Activated CD8-positive, alpha-beta T cell treated with anti-CD3 and anti-CD28 coated beads for 36 hours (primary cell): ENCODE measurements at regions of chr1 and their contacts with region 1.

Region 1: DNA sequence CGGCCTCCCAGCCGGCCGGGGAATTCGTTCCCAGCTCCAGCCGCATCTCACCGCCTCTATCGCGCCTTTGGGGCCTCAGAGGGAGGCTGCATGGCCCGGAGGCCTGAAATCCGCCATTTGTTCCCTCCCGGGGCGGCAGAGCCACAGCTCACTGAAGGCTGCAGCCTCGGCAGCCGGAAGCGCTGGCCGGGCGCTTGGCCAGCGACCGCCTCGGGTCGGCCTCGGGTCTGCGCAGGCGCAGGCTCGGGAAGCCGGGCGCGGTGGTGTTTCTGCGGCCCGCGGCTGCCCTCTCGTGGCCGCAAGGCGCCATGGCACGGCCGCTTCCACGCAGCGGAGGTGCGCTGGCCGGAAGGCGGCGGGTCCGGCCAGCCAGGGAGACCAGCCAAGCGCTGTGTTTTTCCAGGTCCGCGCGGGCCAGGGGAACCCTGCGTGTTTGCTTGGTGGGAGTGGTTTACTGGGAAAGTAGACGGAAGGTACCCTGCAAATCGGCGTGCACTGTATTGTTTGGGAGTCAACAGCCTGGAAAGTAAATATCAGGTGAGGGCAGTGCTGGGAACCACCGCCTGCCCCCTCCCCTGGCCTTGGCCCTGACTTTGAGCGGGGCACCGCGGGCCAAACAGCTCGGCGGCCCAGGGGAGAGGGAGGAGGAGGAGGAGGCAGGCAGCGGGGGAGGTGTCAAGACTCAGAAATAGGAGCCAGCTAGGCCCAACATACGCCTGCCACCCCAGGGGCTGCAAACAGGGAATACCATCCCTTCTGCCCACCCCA is 52.7 kb upstream of the CD34 start:
- DNase-seq: peak; percentile 85
- ATAC-seq: peak; percentile 91
- H3K4me3 Mint-ChIP-seq: peak overlapping the region; percentile 77
- H3K27ac Mint-ChIP-seq: peak overlapping the region; percentile 77
- H3K4me1 Mint-ChIP-seq: peaks cover 4% of the 10 kb centered on the region
- H3K27me3 Mint-ChIP-seq: peaks cover 22% of the 10 kb centered on the region
- CTCF ChIP-seq: peak; percentile 98

Region 2: DNA sequence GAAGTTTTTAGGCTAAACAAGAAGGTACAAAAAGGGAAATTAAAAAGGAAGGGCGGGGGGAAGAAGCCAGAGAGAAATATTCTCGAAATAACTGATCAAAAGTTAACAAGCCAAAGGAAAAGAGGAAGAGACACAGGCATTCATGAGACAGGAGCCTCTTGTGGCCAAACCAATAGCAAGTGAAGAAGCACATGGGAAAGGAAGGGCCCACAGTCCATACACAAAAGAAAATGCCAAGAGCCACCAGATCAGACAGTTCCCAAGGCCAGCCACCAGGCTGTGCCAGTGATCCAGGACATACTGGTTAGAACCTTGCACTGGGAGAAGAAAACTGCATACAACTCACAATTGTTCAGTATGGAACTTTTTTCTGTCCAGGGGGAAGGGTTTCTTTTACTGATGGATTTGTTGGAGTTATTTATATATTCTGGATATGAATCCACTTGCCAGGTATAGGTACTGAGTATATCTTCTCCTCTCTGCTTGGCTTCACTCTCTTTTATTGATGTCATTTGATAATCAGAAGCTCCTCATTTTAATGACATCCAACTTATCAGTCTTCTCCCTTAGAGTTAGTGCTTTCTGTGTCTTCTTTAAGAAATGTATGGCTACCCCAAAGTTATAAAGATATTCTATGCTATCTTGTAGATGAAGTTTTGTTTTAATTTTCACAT is 135.0 kb before region 1 on chr1:
- CTCF ChIA-PET with region 1: interaction called, 83 read pairs
- POLR2A ChIA-PET with region 1: interaction called, 3 read pairs
- intact Hi-C with region 1: loop called (anchors 5 kb)
- DNase-seq: peak; percentile 73
- ATAC-seq: no peak
- H3K4me3 Mint-ChIP-seq: no peak overlapping the region
- H3K27ac Mint-ChIP-seq: peak overlapping the region; percentile 73
- H3K4me1 Mint-ChIP-seq: peaks cover 96% of the 10 kb centered on the region
- H3K27me3 Mint-ChIP-seq: no peaks in the 10 kb centered on the region
- CTCF ChIP-seq: peak; percentile 71

Region 3: GRCh38 chr1:207876131-207876530 is 87.5 kb before region 1 on chr1:
- CTCF ChIA-PET with region 1: interaction called, 253 read pairs
- POLR2A ChIA-PET with region 1: interaction called, 5 read pairs
- intact Hi-C with region 1: no loop called
- DNase-seq: peak; percentile 55
- ATAC-seq: no peak
- H3K4me3 Mint-ChIP-seq: no peak overlapping the region
- H3K27ac Mint-ChIP-seq: no peak overlapping the region
- H3K4me1 Mint-ChIP-seq: peaks cover 46% of the 10 kb centered on the region
- H3K27me3 Mint-ChIP-seq: no peaks in the 10 kb centered on the region
- CTCF ChIP-seq: no peak

Region 4: DNA sequence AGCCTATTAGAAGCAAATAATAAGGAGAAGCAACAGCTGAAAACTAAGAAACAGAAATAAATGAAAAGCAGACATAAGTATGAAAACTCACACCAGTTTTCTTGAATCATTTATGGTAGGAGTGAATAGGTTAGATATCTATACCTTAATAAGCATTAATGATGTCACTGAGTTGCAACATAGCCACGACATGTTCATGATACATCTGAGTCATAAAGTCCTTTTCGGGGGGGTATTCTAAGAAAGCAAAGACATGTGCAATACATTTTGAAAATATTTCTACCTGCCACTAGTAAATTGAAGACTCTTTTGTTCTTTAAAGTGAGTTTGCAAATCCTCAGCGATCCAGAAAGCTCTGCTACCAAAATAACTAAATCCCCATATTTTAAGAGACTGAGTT is 59.8 kb before region 1 on chr1:
- CTCF ChIA-PET with region 1: interaction called, 20 read pairs
- POLR2A ChIA-PET with region 1: interaction called, 3 read pairs
- intact Hi-C with region 1: loop called (anchors 5 kb)
- DNase-seq: no peak
- ATAC-seq: peak; percentile 41
- H3K4me3 Mint-ChIP-seq: no peak overlapping the region
- H3K27ac Mint-ChIP-seq: no peak overlapping the region
- H3K4me1 Mint-ChIP-seq: peaks cover 18% of the 10 kb centered on the region
- H3K27me3 Mint-ChIP-seq: peaks cover 4% of the 10 kb centered on the region
- CTCF ChIP-seq: no peak

Region 5: GRCh38 chr1:207952617-207953542 is 10.7 kb before region 1 on chr1:
- CTCF ChIA-PET with region 1: interaction called, 15 read pairs
- POLR2A ChIA-PET with region 1: no interaction called
- intact Hi-C with region 1: no loop called
- DNase-seq: no peak
- ATAC-seq: no peak
- H3K4me3 Mint-ChIP-seq: no peak overlapping the region
- H3K27ac Mint-ChIP-seq: no peak overlapping the region
- H3K4me1 Mint-ChIP-seq: no peaks in the 10 kb centered on the region
- H3K27me3 Mint-ChIP-seq: peaks cover 12% of the 10 kb centered on the region
- CTCF ChIP-seq: no peak

Region 6: GRCh38 chr1:208036109-208036808 is 72.6 kb after region 1 on chr1:
- CTCF ChIA-PET with region 1: no interaction called
- POLR2A ChIA-PET with region 1: no interaction called
- intact Hi-C with region 1: no loop called
- DNase-seq: no peak
- ATAC-seq: no peak
- H3K4me3 Mint-ChIP-seq: no peak overlapping the region
- H3K27ac Mint-ChIP-seq: no peak overlapping the region
- H3K4me1 Mint-ChIP-seq: no peaks in the 10 kb centered on the region
- H3K27me3 Mint-ChIP-seq: no peaks in the 10 kb centered on the region
- CTCF ChIP-seq: no peak

Region 7: GRCh38 chr1:208159555-208160258 is 196.1 kb after region 1 on chr1:
- CTCF ChIA-PET with region 1: no interaction called
- POLR2A ChIA-PET with region 1: no interaction called
- intact Hi-C with region 1: no loop called
- DNase-seq: no peak
- ATAC-seq: no peak
- H3K4me3 Mint-ChIP-seq: no peak overlapping the region
- H3K27ac Mint-ChIP-seq: no peak overlapping the region
- H3K4me1 Mint-ChIP-seq: no peaks in the 10 kb centered on the region
- H3K27me3 Mint-ChIP-seq: peaks cover 11% of the 10 kb centered on the region
- CTCF ChIP-seq: no peak